Esophagus muscularis mucosa (tissue), 4 donors: ENCODE measurements at regions of chr20 and their contacts with region 1.

Region 1: DNA sequence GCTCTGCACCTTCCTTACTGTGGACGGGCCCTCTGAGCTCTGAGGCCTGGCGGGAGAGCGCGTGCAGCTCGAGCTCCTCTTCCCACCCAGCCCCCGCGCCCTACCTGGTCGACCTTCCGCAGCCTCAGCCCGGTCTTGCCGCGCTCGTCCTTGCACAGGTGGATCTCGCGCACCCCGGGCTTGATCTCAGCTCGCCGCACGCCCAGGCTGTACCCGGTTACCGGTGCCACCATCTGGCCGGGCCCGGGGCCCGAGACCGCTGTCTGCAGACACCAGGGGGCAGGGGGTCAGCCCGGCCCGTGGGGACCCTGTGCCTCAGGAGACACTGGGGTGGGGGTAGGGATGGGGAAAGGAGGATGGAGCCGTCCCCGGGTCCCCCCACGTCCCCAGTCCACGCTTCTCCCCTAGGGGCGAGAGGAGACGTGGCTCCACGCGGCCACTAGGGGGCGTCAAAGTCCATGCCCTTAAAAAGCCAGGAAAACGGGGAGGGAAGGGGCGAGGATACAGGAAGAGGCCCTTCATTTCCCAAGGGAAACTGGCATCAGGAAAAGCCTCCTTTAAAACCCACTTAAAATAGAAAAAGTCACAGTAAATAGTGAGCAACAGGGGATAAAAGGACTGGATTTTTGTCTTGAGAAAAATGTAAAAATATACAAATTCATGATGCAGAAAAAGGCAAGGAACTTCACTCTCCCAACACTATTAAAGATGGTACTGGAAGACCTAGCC is 15.5 kb downstream of the SDCBP2 start:
- DNase-seq: peak; percentile 94
- H3K4me3 ChIP-seq: peak overlapping the region; percentile 34 to 52 (median 40)
- H3K27ac ChIP-seq: no peak overlapping the region
- H3K4me1 ChIP-seq: peaks cover 11 to 13% (median 12%) of the 10 kb centered on the region in 4 donors
- H3K27me3 ChIP-seq: no peaks in the 10 kb centered on the region
- CTCF ChIP-seq: peak; percentile 95 to 98 (median 97)
- EP300 ChIP-seq: no peak
- POLR2A ChIP-seq: no peak

Region 2: GRCh38 chr20:1437235-1437904 is 124.0 kb after region 1 on chr20:
- intact Hi-C with region 1: loop called (anchors 1 kb)
- DNase-seq: peak; percentile 92
- H3K4me3 ChIP-seq: no peak overlapping the region
- H3K27ac ChIP-seq: no peak overlapping the region
- H3K4me1 ChIP-seq: no peaks in the 10 kb centered on the region
- H3K27me3 ChIP-seq: no peaks in the 10 kb centered on the region
- CTCF ChIP-seq: peak; percentile 76 to 83 (median 81)
- EP300 ChIP-seq: no peak
- POLR2A ChIP-seq: no peak

Region 3: DNA sequence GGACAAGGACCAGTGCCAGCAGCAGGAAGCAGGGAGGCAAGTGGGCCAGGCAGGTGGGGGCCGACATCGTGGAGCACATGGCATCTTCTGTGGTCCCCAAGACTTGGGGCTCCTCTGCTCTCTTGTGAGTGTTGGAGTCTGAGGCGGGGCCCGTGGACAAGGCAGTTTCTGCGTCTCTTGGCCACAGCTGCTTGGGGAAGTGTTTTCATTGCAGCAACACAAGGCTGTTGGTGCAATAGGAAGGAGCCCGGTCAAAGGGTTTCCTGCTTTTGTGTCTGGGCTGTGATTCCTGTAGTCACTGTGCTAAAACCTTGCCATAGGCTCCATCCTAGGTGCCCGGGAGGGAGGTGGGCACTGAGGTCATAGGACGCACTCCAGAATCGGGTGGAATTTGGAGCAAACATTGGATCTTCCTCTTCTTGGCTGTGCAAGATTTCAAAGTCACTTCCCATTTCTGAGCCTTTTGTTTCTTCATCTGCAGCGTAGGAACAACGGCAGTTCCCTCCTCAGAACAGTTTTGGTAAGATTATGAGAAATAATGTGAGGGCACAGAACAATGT is 178.0 kb after region 1 on chr20 and contains the start of gene SIRPB2:
- intact Hi-C with region 1: no loop called
- DNase-seq: peak; percentile 93
- H3K4me3 ChIP-seq: peak within 1 kb of the TSS; percentile 24 to 44 (median 32)
- H3K27ac ChIP-seq: peak within 1 kb of the TSS in 3 of 4 donors; percentile 58 to 65 (median 63)
- H3K4me1 ChIP-seq: peaks cover 0 to 10% (median 0%) of the 10 kb centered on the region in 4 donors
- H3K27me3 ChIP-seq: peaks cover 0 to 8% (median 0%) of the 10 kb centered on the region in 4 donors
- CTCF ChIP-seq: no peak
- EP300 ChIP-seq: no peak
- POLR2A ChIP-seq: no peak
- total RNA-seq, gene SIRPB2: 4.7 to 8.1 (median 6.2) TPM

Region 4: DNA sequence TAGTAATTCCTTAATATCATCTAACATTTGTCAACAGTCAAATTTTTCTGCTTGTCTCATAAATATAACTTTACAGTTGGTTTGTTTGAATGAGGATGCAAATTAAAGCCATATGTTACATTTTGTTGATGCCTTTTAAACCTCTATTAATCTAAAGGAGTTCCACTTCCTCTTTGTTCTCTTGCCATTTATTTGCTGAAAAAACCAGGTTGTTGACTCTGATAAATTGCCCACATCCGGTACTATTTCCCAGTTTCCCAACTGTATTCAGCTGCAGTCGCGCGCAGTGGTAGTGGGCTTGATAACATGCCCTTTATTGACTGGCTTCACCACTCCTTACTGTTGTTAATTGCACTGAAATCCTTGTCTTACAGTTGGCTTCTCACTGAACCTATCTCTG is 210.6 kb after region 1 on chr20:
- intact Hi-C with region 1: no loop called
- DNase-seq: no peak
- H3K4me3 ChIP-seq: no peak overlapping the region
- H3K27ac ChIP-seq: no peak overlapping the region
- H3K4me1 ChIP-seq: no peaks in the 10 kb centered on the region
- H3K27me3 ChIP-seq: no peaks in the 10 kb centered on the region
- CTCF ChIP-seq: no peak
- EP300 ChIP-seq: no peak
- POLR2A ChIP-seq: no peak